Activated CD4-positive, alpha-beta memory T cell treated with anti-CD3 and anti-CD28 coated beads for 36 hours (primary cell): ENCODE measurements at regions of chr9 and their contacts with region 1.

Region 1: DNA sequence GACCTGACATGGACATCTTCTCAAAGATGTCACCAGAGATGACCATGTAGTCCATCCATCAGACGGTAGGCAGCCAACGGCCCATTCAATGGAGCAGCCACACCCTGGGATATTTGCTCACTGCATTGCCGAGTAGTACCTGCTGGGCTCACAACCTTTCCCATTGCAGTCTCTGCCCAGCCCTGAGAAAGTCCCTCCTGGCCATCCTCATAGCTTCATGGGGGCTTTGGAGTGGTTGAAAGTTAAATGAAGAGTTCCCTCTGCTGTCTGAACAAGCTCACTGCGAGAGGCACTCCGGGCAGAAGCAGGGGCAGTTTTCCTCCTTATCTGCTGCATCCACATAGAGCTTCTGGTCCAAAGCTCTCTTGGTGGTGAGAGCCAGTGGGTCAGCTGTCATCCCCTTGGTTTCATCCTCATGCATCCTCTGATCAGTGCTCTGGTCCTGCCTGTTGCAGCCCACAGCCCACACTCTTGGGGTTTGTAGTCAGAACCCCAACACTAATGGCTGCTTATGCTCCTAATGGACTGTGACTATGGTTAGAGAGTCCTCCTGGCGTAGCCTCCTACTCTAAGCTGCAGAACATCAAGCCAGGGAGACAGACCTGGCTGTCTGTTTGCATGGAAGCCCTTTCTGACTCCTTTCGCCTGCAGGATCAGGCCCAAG is 23.4 kb downstream of the TNFSF8 start:
- DNase-seq: peak; percentile 46
- H3K4me3 Mint-ChIP-seq: no peak overlapping the region
- H3K27ac Mint-ChIP-seq: peak overlapping the region; percentile 96
- H3K4me1 Mint-ChIP-seq: peaks cover 92% of the 10 kb centered on the region
- H3K27me3 Mint-ChIP-seq: no peaks in the 10 kb centered on the region

Region 2: DNA sequence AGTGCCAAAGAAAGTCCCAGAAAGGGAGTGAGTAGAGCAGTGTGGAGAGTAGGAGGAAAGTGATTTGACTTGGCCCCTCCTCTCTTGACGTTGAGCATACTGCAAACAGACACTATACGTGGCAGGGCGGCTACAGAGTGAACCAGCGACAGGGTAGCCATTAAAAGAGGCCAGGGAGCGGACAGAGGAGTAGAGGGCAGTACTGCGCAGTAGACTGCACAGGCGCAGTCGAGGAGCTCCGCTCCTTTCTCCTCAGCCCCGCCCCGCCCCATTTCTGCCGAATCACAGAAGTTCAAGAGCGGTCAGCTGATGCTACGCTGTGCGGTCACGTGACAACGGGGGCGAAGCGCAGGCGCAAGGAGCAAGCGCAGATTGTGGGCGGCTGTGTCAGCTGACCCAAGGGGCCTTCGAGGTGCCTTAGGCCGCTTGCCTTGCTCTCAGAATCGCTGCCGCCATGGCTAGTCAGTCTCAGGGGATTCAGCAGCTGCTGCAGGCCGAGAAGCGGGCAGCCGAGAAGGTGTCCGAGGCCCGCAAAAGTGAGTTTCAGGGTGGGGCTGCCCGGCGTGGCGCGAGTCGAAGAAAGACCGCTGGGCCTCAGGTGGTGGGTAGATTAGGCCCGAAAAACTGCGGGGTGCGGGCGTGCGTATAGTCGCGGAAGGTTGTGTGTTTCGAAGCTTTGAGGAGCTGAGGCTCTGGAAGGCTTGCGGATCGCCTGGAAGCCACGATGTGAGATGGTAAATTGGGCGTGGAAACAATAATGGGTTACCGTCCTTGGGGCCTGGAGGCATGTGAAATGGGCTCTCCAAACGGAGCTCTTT is 319.4 kb before region 1 on chr9 and contains the start of gene ATP6V1G1:
- CTCF ChIA-PET with region 1: no interaction called
- POLR2A ChIA-PET with region 1: no interaction called
- intact Hi-C with region 1: loop called (anchors 5 kb)
- DNase-seq: peak; percentile 100
- H3K4me3 Mint-ChIP-seq: peak within 1 kb of the TSS; percentile 99
- H3K27ac Mint-ChIP-seq: peak within 1 kb of the TSS; percentile 97
- H3K4me1 Mint-ChIP-seq: peaks cover 40% of the 10 kb centered on the region
- H3K27me3 Mint-ChIP-seq: no peaks in the 10 kb centered on the region
- total RNA-seq, gene ATP6V1G1: 32.1 to 38.9 TPM

Region 3: DNA sequence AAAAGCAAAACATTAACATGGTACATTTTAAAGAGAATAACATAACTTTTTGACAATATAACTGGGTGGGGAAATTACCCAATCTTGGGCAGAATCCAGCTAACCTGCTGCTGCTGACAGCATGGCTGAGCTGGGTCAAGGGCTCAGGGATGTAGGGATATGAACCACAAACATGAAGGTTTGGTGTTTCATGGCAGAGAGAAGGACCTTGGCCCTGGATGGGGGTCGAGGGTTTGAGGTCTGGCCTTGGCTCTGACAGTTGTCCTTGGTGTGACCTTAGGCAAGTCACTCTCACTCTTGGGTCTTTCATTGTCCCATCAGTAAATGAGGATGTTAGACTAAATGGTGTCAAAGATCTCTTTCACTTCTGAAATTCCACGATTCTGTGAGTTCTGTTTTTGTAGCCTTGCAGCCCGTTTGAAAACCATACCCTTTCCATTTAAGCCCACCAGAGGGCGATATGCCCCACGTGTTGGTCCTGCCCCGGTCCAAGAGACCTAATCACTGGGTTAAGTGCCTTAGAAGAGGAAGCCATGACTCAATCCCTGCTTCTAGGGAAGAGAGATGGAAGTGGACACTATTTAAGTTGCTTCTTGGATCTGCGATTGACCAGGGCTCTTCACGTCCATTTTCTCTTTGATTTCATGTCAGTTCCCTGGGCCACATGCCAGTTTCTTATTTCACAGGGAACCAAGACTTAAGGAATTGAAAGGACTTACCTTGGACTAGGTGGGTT is 168.3 kb before region 1 on chr9:
- CTCF ChIA-PET with region 1: interaction called, 120 read pairs
- POLR2A ChIA-PET with region 1: interaction called, 3 read pairs
- intact Hi-C with region 1: loop called (anchors 1 kb)
- DNase-seq: peak; percentile 81
- H3K4me3 Mint-ChIP-seq: no peak overlapping the region
- H3K27ac Mint-ChIP-seq: peak overlapping the region; percentile 81
- H3K4me1 Mint-ChIP-seq: peaks cover 52% of the 10 kb centered on the region
- H3K27me3 Mint-ChIP-seq: no peaks in the 10 kb centered on the region

Region 4: DNA sequence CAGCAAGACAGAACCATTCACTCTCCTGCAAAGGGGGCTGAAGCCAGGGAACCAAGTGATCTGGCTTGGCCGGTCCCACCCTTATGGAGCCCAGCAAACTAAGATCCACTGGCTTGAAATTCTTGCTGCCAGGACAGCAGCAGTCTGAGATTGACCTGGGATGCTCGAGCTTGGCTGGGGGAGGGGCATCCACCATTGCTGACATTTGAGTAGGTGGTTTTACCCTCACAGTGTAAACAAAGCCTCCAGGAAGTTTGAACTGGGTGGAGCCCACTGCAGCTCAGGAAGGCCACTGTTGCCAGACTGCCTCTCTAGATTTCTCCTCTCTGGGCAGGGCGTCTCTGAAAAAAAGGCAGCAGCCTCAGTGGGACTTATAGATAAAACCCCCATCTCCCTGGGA is 37.2 kb before region 1 on chr9:
- CTCF ChIA-PET with region 1: no interaction called
- POLR2A ChIA-PET with region 1: no interaction called
- intact Hi-C with region 1: no loop called
- DNase-seq: peak; percentile 43
- H3K4me3 Mint-ChIP-seq: no peak overlapping the region
- H3K27ac Mint-ChIP-seq: peak overlapping the region; percentile 13
- H3K4me1 Mint-ChIP-seq: peaks cover 20% of the 10 kb centered on the region
- H3K27me3 Mint-ChIP-seq: no peaks in the 10 kb centered on the region

Region 5: GRCh38 chr9:114894801-114895433 is 12.1 kb before region 1 on chr9:
- CTCF ChIA-PET with region 1: interaction called, 16 read pairs
- POLR2A ChIA-PET with region 1: interaction called, 4 read pairs
- intact Hi-C with region 1: loop called (anchors 1 kb)
- DNase-seq: peak; percentile 76
- H3K4me3 Mint-ChIP-seq: no peak overlapping the region
- H3K27ac Mint-ChIP-seq: peak overlapping the region; percentile 77
- H3K4me1 Mint-ChIP-seq: peaks cover 52% of the 10 kb centered on the region
- H3K27me3 Mint-ChIP-seq: no peaks in the 10 kb centered on the region

Region 6: DNA sequence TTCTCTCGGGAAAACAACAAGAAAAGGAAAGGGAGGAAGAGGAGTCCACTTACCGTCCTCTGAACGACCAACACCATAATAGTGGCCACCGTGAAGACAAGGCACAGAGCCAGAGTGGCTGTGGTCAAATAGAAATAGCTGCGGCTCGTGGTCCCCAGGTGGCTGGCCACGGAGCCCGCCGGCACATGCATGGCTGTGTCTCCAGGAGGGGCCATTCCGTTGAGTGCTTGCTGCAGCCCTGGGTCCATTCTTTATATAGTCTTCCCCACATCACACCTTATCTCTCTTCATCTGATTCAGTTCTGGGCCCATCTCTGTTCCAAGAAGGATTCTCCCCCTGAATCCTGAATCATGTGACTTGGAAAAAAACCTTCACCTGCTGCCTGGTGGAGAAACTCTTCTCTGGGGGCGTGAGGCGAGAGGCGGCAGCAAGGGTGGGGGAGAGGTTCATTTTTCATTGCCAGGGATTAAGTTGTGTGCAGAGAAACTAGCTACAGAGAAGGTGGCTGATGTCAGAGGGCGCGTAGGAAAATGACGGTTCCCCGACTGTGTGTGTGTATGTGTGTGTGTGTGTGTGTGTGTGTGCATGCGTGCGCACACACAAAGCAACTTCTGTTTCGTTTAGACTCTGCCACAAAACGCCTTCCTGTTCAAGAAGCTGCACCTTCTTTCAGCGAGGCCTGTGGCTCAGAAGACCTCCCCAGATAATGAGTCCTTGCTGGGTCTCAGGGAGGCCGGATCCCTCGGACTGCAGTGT is 23.2 kb after region 1 on chr9 and contains the start of gene TNFSF8:
- CTCF ChIA-PET with region 1: interaction called, 20 read pairs
- POLR2A ChIA-PET with region 1: interaction called, 20 read pairs
- intact Hi-C with region 1: loop called (anchors 1 kb)
- DNase-seq: peak; percentile 90
- H3K4me3 Mint-ChIP-seq: peak within 1 kb of the TSS; percentile 94
- H3K27ac Mint-ChIP-seq: peak within 1 kb of the TSS; percentile 97
- H3K4me1 Mint-ChIP-seq: peaks cover 44% of the 10 kb centered on the region
- H3K27me3 Mint-ChIP-seq: no peaks in the 10 kb centered on the region
- total RNA-seq, gene TNFSF8: 37.9 to 38.7 TPM

Region 7: GRCh38 chr9:114968671-114969070 is 61.6 kb after region 1 on chr9:
- CTCF ChIA-PET with region 1: no interaction called
- POLR2A ChIA-PET with region 1: no interaction called
- intact Hi-C with region 1: no loop called
- DNase-seq: no peak
- H3K4me3 Mint-ChIP-seq: no peak overlapping the region
- H3K27ac Mint-ChIP-seq: no peak overlapping the region
- H3K4me1 Mint-ChIP-seq: peaks cover 24% of the 10 kb centered on the region
- H3K27me3 Mint-ChIP-seq: no peaks in the 10 kb centered on the region

Region 8: DNA sequence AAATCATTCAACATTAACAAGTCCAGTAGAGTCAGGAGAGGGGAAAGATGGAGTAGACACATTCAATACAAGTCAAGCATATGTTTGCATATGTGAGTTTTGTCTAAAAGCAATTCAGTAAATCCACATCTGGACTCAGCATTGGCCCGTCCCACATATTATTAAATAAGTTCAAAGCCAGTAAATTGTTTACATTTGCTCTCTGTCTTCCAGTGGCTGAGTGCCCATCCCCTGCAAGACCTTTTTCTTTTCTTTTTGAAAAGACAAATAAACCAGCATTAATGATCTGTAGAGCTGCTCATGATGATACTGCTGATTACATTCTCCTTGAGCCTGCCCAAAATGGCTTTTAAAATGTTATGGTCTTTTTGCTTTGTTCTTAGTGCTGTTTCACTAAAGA is 139.8 kb after region 1 on chr9:
- CTCF ChIA-PET with region 1: no interaction called
- POLR2A ChIA-PET with region 1: no interaction called
- intact Hi-C with region 1: no loop called
- DNase-seq: no peak
- H3K4me3 Mint-ChIP-seq: no peak overlapping the region
- H3K27ac Mint-ChIP-seq: no peak overlapping the region
- H3K4me1 Mint-ChIP-seq: peaks cover 24% of the 10 kb centered on the region
- H3K27me3 Mint-ChIP-seq: peaks cover 1% of the 10 kb centered on the region

Region 9: GRCh38 chr9:115204904-115205453 is 297.9 kb after region 1 on chr9:
- CTCF ChIA-PET with region 1: no interaction called
- POLR2A ChIA-PET with region 1: no interaction called
- intact Hi-C with region 1: loop called (anchors 5 kb)
- DNase-seq: no peak
- H3K4me3 Mint-ChIP-seq: no peak overlapping the region
- H3K27ac Mint-ChIP-seq: no peak overlapping the region
- H3K4me1 Mint-ChIP-seq: peaks cover 27% of the 10 kb centered on the region
- H3K27me3 Mint-ChIP-seq: peaks cover 46% of the 10 kb centered on the region